ENCODE measurements at regions of chr4 and their contacts with region 1.

Region 1: GRCh38 chr4:56435306-56435926 is at the start of gene PPAT:
- DNase-seq: peak; percentile 98
- ATAC-seq: peak; percentile 83
- H3K4me3 Mint-ChIP-seq: peak within 1 kb of the TSS; percentile 87
- H3K27ac Mint-ChIP-seq: peak within 1 kb of the TSS; percentile 92
- H3K4me1 Mint-ChIP-seq: peaks cover 53% of the 10 kb centered on the region
- H3K27me3 Mint-ChIP-seq: no peaks in the 10 kb centered on the region
- total RNA-seq, gene PPAT: 29.0 to 32.5 TPM

Region 2: DNA sequence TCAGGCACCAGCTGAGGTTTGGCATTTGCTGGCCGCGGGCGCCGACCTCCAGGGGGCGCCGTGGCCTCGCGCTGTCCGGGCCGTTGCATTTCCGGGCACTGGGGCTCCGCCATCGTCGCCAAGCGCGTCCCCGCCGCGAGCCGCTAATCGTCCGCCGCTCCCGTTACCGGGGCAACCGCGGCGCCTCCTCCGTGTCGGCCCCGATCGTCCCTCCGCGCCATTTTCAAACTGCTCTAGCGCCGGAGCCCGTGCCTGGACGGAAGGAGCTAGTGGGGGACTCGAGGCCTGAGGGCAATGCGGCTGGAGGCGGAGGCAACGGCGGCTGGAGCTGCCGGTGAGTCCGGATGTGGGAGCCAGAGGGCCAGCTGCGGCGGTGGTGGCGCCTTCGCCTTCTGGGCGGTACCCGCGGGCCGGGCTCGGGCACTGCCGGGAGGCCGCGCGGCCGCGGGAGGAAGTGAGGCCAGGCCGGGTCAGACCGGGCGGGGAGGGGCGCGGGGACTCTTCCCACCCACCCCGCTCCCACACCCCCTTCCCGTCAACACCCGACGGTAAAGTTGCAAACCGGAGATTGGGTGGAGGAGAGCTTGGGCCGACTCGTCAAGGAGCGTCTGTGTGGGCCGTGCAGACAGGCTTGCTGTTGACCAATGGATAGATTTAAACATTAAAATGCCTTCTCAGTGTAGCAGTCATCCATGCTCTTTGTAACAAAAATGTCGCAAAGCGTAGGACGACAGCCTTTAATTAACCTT is 486.5 kb before region 1 on chr4 and contains the start of gene CEP135:
- CTCF ChIA-PET with region 1: interaction called, 14 read pairs
- POLR2A ChIA-PET with region 1: interaction called, 4 read pairs
- DNase-seq: peak; percentile 93
- ATAC-seq: peak; percentile 86
- H3K4me3 Mint-ChIP-seq: peak within 1 kb of the TSS; percentile 76
- H3K27ac Mint-ChIP-seq: peak within 1 kb of the TSS; percentile 97
- H3K4me1 Mint-ChIP-seq: peaks cover 31% of the 10 kb centered on the region
- H3K27me3 Mint-ChIP-seq: no peaks in the 10 kb centered on the region
- total RNA-seq, gene CEP135: 16.4 to 17.0 TPM

Region 3: GRCh38 chr4:56424697-56425514 is 10.5 kb before region 1 on chr4:
- CTCF ChIA-PET with region 1: interaction called, 58 read pairs
- POLR2A ChIA-PET with region 1: interaction called, 7 read pairs
- DNase-seq: peak; percentile 55
- ATAC-seq: no peak
- H3K4me3 Mint-ChIP-seq: no peak overlapping the region
- H3K27ac Mint-ChIP-seq: no peak overlapping the region
- H3K4me1 Mint-ChIP-seq: peaks cover 20% of the 10 kb centered on the region
- H3K27me3 Mint-ChIP-seq: no peaks in the 10 kb centered on the region

Region 4: DNA sequence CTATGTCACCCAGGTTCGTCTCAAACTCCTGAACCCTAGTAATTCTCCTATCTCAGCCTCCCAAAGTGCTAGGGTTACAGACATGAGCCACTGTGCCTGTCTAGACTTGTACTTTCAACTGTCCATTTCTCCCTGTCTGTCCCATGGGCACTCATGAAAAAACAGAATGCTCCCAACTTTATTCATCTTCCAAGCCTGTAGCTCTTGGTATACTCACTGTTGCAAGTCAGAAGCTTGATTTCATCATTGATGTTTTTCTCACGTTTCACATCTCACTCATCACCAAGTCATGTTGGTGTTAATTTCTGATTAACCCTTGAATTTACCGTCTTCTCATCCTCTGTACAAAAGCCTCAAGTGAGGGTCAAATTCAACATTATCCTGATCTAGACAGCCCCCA is 24.7 kb after region 1 on chr4:
- CTCF ChIA-PET with region 1: interaction called, 14 read pairs
- POLR2A ChIA-PET with region 1: interaction called, 20 read pairs
- DNase-seq: no peak
- ATAC-seq: no peak
- H3K4me3 Mint-ChIP-seq: no peak overlapping the region
- H3K27ac Mint-ChIP-seq: no peak overlapping the region
- H3K4me1 Mint-ChIP-seq: peaks cover 8% of the 10 kb centered on the region
- H3K27me3 Mint-ChIP-seq: no peaks in the 10 kb centered on the region

Region 5: DNA sequence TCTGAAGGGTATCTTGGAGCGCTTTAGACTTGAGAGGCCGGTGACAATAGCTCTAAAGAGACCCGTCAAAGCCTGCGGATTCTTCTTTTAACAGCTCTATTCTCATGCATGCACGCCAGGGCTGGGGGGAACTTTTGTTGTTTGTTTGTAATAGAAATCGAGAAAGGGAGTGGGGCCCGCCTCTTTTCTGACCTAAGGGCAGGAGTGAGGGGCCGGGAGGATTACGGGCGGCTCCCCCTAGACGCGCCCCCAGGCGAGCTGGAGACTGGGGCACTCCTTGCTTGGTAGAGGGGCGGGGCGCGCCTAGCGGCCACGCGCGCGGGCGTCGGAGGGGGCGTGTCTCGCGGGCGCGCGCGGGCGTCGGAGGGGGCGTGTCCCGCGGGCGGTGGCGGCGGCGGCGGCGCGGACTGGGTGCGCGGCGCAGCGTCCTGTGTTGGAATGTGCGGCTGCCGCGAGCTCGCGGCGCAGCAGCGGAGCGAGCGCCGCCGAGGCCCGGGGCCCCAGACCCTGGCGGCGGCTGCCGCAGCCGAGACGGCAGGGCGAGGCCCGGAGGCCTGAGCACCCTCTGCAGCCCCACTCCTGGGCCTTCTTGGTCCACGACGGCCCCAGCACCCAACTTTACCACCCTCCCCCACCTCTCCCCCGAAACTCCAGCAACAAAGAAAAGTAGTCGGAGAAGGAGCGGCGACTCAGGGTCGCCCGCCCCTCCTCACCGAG is 472.2 kb after region 1 on chr4 and contains the start of gene REST:
- CTCF ChIA-PET with region 1: interaction called, 4 read pairs
- POLR2A ChIA-PET with region 1: interaction called, 12 read pairs
- DNase-seq: peak; percentile 82
- ATAC-seq: peak; percentile 67
- H3K4me3 Mint-ChIP-seq: peak within 1 kb of the TSS; percentile 91
- H3K27ac Mint-ChIP-seq: peak within 1 kb of the TSS; percentile 79
- H3K4me1 Mint-ChIP-seq: peaks cover 37% of the 10 kb centered on the region
- H3K27me3 Mint-ChIP-seq: peaks cover 8% of the 10 kb centered on the region
- total RNA-seq, gene REST: 45.1 to 46.1 TPM